Posterior vena cava (tissue), 2 donors: ENCODE measurements at regions of chr9 and their contacts with region 1.

Region 1: GRCh38 chr9:121317742-121318489 is 50.0 kb downstream of the GSN start:
- DNase-seq: no peak

Region 2: GRCh38 chr9:121023064-121023463 is 294.9 kb before region 1 on chr9:
- intact Hi-C with region 1: no loop called
- DNase-seq: no peak

Region 3: GRCh38 chr9:121074635-121075385 is 243.1 kb before region 1 on chr9 and contains the start of gene CNTRL:
- intact Hi-C with region 1: loop called in 1 of 2 experiments (anchors 2 kb)
- DNase-seq: peak; percentile 97
- total RNA-seq, gene CNTRL: 13.6 to 15.2 TPM

Region 4: DNA sequence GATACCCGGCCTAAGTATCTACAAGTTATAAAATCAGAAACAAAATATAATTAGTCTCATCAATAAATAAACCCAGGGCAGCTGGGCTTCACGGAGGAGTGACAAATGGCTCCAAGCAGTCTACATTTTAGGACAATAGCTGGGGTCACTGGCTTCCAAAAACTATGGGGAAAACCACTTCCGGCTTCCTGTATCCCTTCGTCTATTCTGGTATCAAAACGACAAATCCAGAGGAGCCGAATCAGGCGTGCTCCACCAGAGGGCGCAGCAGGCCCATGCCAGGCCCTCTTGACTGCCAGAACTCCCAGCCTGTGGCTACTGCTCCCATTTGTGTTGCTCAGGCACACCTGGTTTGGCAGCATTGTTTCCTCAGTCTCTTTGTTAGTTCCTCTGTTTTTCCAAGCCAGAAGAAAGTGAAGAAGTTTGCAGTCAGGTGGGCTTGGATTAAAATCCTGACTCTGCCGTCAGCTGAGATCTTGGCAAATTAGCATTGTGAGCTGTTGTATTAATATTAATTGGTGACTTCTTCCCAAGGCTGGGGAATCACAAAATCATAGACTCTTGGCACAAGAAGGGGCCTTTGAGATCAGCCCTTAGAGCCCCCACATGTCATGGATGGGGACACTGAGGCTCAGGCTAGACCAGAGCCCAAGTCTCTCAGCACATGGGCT is 104.6 kb before region 1 on chr9:
- intact Hi-C with region 1: loop called in 1 of 2 experiments (anchors 5 kb)
- DNase-seq: peak; percentile 96

Region 5: GRCh38 chr9:121222524-121223171 is 95.3 kb before region 1 on chr9:
- intact Hi-C with region 1: loop called in 1 of 2 experiments (anchors 10 kb)
- DNase-seq: no peak

Region 6: DNA sequence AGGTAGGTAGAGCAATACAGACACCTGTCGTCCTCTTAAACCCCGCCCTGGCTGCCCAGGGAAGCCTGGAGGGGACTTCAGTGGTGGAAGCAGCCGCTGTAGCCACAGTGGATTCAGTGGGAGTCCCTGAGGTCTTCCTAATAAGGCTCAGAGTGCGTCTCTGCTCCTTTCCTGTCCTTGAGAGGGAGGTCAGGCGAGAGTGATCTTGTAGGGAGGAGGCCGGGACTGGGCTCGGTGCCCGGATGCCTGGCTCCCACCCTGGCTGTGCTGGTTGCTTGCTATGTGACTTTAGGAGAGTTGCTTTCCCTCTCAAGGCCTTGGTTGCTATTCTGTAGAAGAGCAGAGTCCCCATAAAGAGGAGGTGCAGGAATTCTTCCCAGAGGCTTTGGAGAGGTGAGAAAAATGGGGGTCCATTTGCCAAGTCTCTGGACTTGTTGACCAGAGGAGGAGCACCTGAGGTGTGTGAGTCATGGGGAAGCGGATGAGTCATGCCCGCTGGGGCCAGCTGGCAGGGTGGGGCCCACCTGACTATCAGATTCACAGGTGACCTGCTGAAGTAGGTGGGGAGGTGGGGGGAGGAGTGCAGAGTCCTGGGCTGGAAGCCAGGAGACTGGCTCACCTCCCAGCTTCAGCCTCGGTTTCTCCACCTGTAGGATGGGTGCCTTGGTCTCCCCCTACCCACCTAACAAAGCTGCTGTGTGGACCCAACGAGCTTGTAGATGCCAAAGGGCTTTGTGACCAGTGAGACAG is 36.2 kb before region 1 on chr9:
- intact Hi-C with region 1: loop called (anchors 5 kb)
- DNase-seq: peak; percentile 93

Region 7: DNA sequence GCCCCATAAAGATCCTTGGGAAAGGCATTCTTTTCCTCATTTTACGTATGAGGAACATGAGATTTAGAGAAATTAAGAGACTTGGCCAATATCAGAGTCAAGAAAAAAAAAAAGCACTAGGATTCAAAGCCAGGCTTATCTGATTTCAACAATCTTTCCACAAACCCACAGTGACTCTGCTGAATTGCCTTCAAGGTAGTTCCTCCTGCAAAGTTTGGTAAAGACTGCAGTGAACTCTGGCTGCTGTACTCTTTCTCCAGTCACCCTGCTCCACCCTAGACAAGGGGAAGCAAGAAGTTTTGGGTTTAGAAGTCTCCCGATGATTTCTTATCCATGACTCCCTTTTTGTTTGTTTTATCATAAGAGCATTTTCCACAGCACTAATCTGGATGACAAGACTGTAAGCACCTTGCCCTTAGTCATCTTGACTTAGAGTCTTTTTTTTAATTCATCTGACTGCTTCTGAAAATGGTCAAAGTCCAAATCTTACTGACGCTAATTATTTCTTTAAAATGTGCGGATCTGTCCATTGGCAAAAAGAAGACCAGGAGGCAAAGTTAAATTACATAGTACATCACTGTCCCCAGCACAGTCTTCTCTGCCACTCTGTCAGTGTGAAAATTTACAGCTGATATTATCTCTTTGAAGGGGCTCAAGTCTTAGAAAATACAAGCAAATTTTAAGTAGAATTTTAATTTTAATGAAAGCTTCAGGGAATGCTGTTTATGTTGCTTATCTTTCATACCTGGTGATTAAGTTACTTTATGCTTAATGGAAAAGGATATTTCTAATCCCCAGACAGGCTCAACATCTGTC is 595.1 kb after region 1 on chr9:
- intact Hi-C with region 1: no loop called
- DNase-seq: no peak